ENCODE measurements at regions of chr2 and their contacts with region 1.

Region 1: DNA sequence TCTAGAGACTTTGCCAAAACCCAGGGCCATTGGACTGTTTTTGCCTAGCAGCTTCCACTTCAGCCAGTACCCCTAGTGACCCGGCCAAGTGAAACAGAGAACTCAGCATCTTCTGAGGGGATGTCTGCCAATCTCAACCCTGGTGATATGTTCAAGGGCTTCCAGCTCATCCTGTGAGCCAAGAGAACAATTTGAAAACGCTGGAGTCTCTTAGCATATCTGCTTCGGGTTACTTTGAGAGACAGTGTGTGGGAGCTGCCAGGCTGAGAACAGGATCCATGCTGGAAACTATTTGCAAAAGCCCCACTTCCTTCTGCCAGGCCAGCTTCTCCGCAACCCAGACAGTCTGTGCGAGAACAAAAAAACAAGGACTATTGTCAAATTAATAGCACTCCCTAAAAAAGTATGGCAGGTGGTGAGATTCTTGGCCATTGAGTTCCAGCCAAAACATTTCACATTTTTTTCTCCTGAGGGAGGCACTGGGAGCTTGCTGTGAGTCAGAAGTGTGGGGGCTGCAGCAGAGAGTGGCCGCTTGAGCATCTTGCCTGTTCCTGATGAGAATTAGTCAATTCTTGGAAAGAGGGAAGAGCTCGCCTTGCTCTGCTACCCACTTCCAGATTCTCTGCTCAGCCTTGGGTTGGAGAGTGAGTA is 395.6 kb upstream of the TRIB2 start:
- DNase-seq: no peak
- ATAC-seq: no peak
- H3K4me3 ChIP-seq: no peak overlapping the region
- H3K4me3 Mint-ChIP-seq: no peak overlapping the region
- H3K27ac ChIP-seq: no peak overlapping the region
- H3K27ac Mint-ChIP-seq: no peak overlapping the region
- H3K4me1 ChIP-seq: no peaks in the 10 kb centered on the region
- H3K4me1 Mint-ChIP-seq: peaks cover 0 to 11% (median 0%) of the 10 kb centered on the region in 7 donors
- H3K27me3 ChIP-seq: no peaks in the 10 kb centered on the region
- H3K27me3 Mint-ChIP-seq: peaks cover 0 to 16% (median 0%) of the 10 kb centered on the region in 5 donors

Region 2: DNA sequence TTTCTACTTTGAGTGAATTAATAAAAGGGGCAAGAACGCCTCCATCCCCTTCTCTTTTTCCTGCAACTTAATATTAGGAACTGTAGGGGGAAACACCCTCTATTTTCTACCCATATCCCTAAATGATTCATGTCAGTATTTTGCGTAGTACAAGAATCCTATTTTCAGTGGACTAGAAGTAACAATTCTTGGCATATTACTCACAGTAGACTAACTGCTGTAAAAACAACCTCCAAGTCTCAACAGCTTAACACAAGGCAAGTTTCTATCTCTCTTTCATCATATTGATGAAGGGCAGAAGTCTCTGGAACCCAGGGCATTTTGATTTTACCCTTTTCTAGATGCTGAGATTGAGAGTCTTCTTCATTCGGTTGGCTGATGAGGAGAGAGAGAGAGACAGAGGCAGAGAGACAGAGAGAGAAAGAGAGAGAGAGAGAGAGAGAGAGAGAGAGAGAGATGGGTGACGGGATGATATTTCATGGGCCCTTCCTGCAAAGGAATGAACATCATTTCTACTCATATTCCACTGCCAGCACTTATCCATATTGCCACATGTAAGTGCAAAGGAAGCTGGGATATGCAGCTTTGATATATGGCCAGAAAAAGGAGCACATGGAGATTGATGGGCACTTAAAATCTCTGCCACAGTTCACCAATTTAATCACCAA is 93.0 kb before region 1 on chr2:
- CTCF ChIA-PET with region 1: no interaction called
- POLR2A ChIA-PET with region 1: no interaction called
- intact Hi-C with region 1: loop called in 1 of 2 experiments (anchors 5 kb)
- DNase-seq: no peak
- ATAC-seq: no peak
- H3K4me3 ChIP-seq: no peak overlapping the region
- H3K4me3 Mint-ChIP-seq: no peak overlapping the region
- H3K27ac ChIP-seq: no peak overlapping the region
- H3K27ac Mint-ChIP-seq: no peak overlapping the region
- H3K4me1 ChIP-seq: no peaks in the 10 kb centered on the region
- H3K4me1 Mint-ChIP-seq: peaks cover 0 to 1% (median 0%) of the 10 kb centered on the region in 7 donors
- H3K27me3 ChIP-seq: no peaks in the 10 kb centered on the region
- H3K27me3 Mint-ChIP-seq: peaks cover 0 to 16% (median 0%) of the 10 kb centered on the region in 5 donors